ENCODE measurements at regions of chr12 and their contacts with region 1.

Region 1: DNA sequence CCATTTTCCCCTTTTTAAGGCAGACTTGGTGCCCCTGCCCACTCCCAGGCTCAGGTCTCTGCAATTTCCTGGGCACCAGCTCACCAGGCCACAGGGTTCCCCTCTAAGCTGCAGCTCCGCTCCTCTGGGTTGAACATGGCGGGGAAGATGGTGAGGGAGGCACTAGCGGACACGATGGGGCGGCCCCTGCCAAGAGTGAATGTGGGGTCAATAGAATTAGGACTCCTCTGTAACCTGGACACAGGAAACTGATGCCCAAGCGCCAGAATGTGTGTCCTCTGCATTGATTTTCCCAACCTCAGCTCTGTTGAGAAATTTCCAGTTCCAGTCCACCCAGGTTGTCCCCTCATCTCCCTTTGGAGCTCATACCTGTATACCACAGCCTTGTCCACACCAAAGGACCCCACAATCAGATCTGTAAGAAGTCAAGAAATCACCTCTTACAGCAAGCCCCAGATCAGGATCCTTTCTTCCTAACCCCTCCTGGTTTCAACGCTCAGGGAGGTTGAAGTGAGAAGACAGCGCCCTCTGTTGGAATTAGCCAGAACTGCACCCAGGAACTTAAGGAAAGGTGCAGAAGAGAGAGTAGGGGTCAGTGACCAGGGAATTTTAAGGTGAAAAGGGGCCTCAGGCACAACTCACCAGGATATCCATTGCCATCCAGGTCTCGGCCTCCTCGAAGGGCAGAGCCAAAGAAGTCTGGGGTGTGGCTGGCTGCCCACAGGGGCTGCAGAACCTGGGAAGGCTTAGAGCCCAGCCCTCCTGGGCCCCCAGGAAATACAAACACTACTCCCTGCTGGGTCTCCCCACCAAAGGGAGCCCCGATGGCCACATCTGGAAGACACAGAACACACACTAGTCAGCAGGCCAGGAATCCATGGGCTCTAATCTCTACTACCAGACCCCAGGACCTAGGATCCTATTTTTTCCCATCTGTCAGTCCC is 14.7 kb downstream of the ITGA5 start:
- H3K4me3 ChIP-seq: no peak overlapping the region
- H3K27ac ChIP-seq: no peak overlapping the region
- H3K4me1 ChIP-seq: no peaks in the 10 kb centered on the region
- CTCF ChIP-seq: peak; percentile 84

Region 2: GRCh38 chr12:54134850-54135249 is 269.5 kb before region 1 on chr12:
- CTCF ChIA-PET with region 1: no interaction called
- POLR2A ChIA-PET with region 1: no interaction called
- H3K4me3 ChIP-seq: no peak overlapping the region
- H3K27ac ChIP-seq: peak overlapping the region; percentile 17; the same call in 1 of the 2 replicates
- H3K4me1 ChIP-seq: peaks cover 12% of the 10 kb centered on the region
- CTCF ChIP-seq: peak; percentile 70

Region 3: DNA sequence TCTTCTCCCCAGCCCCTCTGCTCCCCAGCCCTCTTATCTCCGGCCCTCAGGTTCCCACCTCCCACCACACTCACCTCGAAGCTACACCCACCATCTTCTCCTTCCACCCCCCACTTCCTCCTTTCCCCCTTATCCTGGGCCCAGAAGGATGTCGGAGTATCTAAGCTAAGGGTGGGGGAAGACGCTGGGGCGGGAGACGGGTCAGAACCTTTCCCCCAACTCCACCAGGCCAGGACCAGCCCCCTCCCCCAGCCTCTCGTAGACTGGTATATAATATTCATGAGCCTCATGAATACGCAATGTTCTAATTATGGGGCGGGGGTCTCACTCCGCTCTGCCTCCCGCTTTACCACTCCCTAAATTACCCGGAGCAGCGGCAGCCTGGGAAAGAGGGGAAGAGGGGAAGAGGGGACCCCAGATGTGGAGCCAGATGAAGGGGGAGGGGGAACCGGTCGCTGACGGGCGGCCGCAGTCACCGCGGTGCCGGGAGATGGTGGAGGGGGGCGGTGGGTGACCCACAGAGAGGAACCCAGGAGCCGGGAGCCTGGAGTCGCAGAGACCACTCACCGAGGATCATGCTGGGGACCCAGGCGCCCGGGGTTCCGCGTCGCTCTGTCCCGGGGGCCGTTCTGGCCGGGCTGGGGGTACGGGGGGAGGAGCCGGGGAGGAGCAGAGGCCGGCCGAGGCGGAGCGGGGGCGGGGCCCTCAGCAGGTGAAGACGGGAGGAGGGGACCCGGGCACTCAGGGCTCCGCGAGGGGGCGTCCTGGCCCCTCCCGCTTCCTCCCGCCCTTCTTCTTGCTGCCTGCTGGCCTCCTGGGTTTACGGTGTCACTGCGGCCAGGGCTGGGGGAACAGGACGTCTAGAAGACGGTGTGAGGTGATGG is 13.4 kb before region 1 on chr12:
- CTCF ChIA-PET with region 1: interaction called, 38 read pairs
- POLR2A ChIA-PET with region 1: no interaction called
- H3K4me3 ChIP-seq: peak overlapping the region; percentile 53
- H3K27ac ChIP-seq: peak overlapping the region; percentile 44; the same call in 1 of the 2 replicates
- H3K4me1 ChIP-seq: peaks cover 21% of the 10 kb centered on the region
- CTCF ChIP-seq: peak; percentile 91

Region 4: GRCh38 chr12:54419088-54419892 is 15.0 kb after region 1 on chr12 and contains the start of gene ITGA5:
- CTCF ChIA-PET with region 1: interaction called, 924 read pairs
- POLR2A ChIA-PET with region 1: interaction called, 11 read pairs
- H3K4me3 ChIP-seq: peak within 1 kb of the TSS; percentile 74
- H3K27ac ChIP-seq: peak within 1 kb of the TSS; percentile 78; the same call in 1 of the 2 replicates
- H3K4me1 ChIP-seq: peaks cover 11% of the 10 kb centered on the region
- CTCF ChIP-seq: no peak

Region 5: GRCh38 chr12:54463034-54463433 is 58.7 kb after region 1 on chr12:
- CTCF ChIA-PET with region 1: interaction called, 18 read pairs
- POLR2A ChIA-PET with region 1: no interaction called
- H3K4me3 ChIP-seq: no peak overlapping the region
- H3K27ac ChIP-seq: no peak overlapping the region
- H3K4me1 ChIP-seq: peaks cover 31% of the 10 kb centered on the region
- CTCF ChIP-seq: no peak